ENCODE measurements at regions of chr1 and their contacts with region 1.

Region 1: GRCh38 chr1:220733090-220733601 is 15.0 kb upstream of the MTARC2 start:
- DNase-seq: peak; percentile 84
- H3K4me3 ChIP-seq: peak overlapping the region; percentile 2 to 33; a peak in 3 of 4 replicates
- H3K27ac ChIP-seq: peak overlapping the region; percentile 17 to 21; a peak in 3 of 4 replicates
- H3K4me1 ChIP-seq: peaks cover 5 to 15% of the 10 kb centered on the region in 2 experiments; a peak in 3 of 4 replicates
- H3K27me3 ChIP-seq: no peaks in the 10 kb centered on the region
- CTCF ChIP-seq: peak; percentile 85
- EP300 ChIP-seq: 0 out of 4 replicates have a peak, but pooled peaks of 1 of the 2 experiments have one; percentile 8
- RAD21 ChIP-seq: peak; percentile 76

Region 2: GRCh38 chr1:220281159-220281574 is 452.0 kb before region 1 on chr1:
- CTCF ChIA-PET with region 1: interaction called, 22 read pairs
- POLR2A ChIA-PET with region 1: no interaction called
- DNase-seq: peak; percentile 18
- H3K4me3 ChIP-seq: no peak overlapping the region
- H3K27ac ChIP-seq: no peak overlapping the region
- H3K4me1 ChIP-seq: peaks cover 0 to 6% of the 10 kb centered on the region in 2 experiments; a peak in 2 of 4 replicates
- H3K27me3 ChIP-seq: no peaks in the 10 kb centered on the region
- CTCF ChIP-seq: peak; percentile 83
- EP300 ChIP-seq: no peak
- RAD21 ChIP-seq: peak; percentile 80

Region 3: DNA sequence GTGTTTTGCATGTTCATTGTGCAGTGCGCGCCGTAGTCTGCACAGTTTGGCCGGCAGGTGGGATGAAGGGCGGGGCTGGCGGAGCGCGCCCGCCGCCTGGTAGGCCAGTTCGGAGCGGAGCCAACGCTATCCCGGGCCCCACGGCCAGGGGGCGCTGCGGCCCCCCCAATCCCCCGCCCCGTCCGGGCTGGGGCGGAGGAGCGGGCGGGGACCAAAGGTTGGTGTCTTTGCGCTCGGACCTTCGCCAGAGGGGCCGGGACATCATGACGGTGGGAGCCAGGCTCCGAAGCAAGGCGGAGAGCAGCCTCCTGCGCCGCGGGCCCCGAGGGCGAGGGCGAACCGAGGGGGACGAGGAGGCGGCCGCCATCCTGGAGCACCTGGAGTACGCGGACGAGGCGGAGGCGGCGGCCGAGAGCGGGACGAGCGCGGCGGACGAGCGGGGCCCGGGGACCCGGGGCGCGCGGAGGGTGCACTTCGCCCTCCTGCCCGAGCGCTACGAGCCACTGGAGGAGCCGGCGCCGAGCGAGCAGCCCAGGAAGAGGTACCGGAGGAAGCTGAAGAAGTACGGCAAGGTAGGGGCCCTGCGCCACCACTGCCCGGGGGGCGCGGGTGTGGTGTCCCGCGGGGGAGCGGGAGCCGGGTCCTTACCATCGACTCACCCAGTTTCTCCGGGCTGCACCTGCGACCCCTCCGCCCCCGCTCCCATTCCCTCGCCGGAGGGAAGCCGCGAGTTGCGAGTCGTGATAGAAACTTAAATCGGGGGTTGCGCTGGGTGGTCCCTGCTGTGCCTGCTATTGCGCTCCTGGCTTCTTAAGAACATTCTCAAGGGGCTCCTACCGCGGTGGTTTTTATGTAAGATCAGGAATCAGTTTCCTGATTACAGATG is 42.8 kb before region 1 on chr1 and contains the start of gene C1orf115:
- CTCF ChIA-PET with region 1: interaction called, 10 read pairs
- POLR2A ChIA-PET with region 1: no interaction called
- DNase-seq: peak; percentile 98
- H3K4me3 ChIP-seq: peak within 1 kb of the TSS; percentile 72 to 80
- H3K27ac ChIP-seq: no peak within 1 kb of the TSS
- H3K4me1 ChIP-seq: peaks cover 0 to 8% of the 10 kb centered on the region in 2 experiments; a peak in 1 of 4 replicates
- H3K27me3 ChIP-seq: no peaks in the 10 kb centered on the region
- CTCF ChIP-seq: peak; percentile 96
- EP300 ChIP-seq: no peak
- RAD21 ChIP-seq: peak; percentile 46
- polyA plus RNA-seq, gene C1orf115: 4.0 and 4.2 TPM in 2 replicates

Region 4: DNA sequence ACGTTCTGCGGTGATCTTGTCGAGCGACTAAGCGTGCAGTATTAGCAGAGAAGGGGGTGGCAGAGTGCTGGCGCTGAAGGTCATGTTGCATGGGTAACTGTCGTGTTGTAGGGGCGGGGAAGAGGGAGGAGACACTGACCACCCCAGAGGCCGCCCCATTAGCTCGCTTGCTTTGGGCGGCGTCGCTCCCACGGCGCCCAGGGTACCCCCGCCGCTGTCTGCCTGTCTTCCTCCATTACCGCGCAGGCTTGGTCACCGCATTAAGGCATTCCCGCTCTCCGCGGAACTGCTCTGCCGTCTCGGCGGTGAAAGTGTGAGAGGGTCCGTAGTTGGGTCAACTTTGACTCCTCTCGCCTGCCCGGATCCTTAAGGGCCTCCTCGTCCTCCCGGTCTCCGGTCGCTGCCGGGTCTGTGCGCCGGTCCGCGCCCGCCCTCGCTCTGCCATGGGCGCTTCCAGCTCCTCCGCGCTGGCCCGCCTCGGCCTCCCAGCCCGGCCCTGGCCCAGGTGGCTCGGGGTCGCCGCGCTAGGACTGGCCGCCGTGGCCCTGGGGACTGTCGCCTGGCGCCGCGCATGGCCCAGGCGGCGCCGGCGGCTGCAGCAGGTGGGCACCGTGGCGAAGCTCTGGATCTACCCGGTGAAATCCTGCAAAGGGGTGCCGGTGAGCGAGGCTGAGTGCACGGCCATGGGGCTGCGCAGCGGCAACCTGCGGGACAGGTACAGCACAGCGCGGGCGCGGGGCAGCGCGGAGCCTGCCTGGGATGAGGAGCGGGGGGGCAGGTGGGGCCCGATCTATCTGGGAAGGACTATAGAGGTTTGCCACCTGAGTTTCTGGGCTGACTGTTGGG is 15.2 kb after region 1 on chr1 and contains the start of gene MTARC2:
- CTCF ChIA-PET with region 1: interaction called, 31 read pairs
- POLR2A ChIA-PET with region 1: interaction called, 3 read pairs
- DNase-seq: peak; percentile 90
- H3K4me3 ChIP-seq: peak within 1 kb of the TSS; percentile 76 to 81
- H3K27ac ChIP-seq: peak within 1 kb of the TSS; percentile 43 to 78; a peak in 3 of 4 replicates
- H3K4me1 ChIP-seq: peaks cover 5 to 16% of the 10 kb centered on the region in 2 experiments; a peak in 1 of 4 replicates
- H3K27me3 ChIP-seq: no peaks in the 10 kb centered on the region
- CTCF ChIP-seq: no peak
- EP300 ChIP-seq: 0 out of 4 replicates have a peak, but pooled peaks of 1 of the 2 experiments have one; percentile 5
- RAD21 ChIP-seq: 0 out of 2 replicates have a peak, but pooled peaks have one; percentile 2
- polyA plus RNA-seq, gene MTARC2: 6.0 and 6.1 TPM in 2 replicates

Measured in SK-N-SH (cell line).